HepG2 (cell line): ENCODE measurements at regions of chr11 and their contacts with region 1.

Region 1: DNA sequence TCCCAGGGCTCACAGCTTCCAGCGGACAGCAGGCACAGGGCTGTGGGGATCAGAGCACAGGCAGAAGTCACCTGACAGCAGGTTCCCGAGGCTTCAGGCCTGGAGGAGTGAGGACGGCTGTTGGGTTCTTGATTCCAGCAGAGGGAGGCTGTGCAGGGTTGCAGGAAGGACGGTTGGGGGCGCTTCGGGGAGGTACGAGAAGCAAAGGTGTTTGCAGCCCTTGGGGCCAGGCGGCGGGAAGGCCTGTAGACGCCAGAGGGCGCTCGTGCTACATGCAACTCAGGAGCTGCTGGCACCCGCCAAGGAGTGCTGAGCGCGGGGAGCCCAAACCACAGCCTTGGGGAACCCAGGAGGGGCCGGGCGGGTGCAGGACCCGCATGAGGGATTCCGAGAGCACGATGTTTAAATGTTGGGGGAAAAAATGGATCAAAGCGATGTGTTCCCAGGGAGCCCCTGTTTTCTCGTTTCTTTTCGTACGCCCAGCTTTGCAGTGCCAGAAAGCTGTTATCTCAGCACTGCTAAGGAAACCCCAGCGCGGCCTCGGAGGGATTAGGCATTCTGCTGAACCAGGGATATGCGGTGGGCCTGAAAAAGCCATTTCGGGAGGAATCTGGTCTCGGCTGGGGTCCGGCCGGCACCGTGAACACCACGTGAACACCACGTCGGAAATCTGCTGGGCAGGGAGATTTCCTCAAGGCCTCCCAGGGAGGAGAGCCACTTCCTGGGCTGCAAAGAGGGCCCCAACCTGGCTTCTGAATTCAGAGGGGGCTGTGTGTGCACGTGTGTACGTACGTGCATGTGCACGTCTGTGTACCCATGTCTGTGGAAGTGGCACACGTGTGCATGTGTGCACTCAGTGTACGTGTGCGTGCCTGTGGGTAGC is 88.1 kb downstream of the KCNQ1 start:
- DNase-seq: peak; percentile 85
- ATAC-seq: peak; percentile 82
- H3K4me3 ChIP-seq: peak overlapping the region in 1 of 3 experiments; percentile 29; a peak in 1 of 6 replicates
- H3K27ac ChIP-seq: no peak overlapping the region
- H3K4me1 ChIP-seq: peaks cover 28% of the 10 kb centered on the region
- H3K27me3 ChIP-seq: peaks cover 8 to 66% of the 10 kb centered on the region in 2 experiments; a peak in 4 of 5 replicates
- CTCF ChIP-seq: peak; percentile 97
- EP300 ChIP-seq: no peak
- POLR2A ChIP-seq: no peak
- RAD21 ChIP-seq: peak; percentile 99

Region 2: GRCh38 chr11:2314525-2315394 is 218.2 kb before region 1 on chr11:
- CTCF ChIA-PET with region 1: no interaction called
- POLR2A ChIA-PET with region 1: no interaction called
- in situ Hi-C with region 1: loop called (anchors 5 kb)
- intact Hi-C with region 1: loop called (anchors 10 kb)
- DNase-seq: no peak
- ATAC-seq: no peak
- H3K4me3 ChIP-seq: no peak overlapping the region
- H3K27ac ChIP-seq: no peak overlapping the region
- H3K4me1 ChIP-seq: no peaks in the 10 kb centered on the region
- H3K27me3 ChIP-seq: peaks cover 14 to 37% of the 10 kb centered on the region in 2 experiments; a peak in 3 of 5 replicates
- CTCF ChIP-seq: no peak
- EP300 ChIP-seq: no peak
- POLR2A ChIP-seq: no peak
- RAD21 ChIP-seq: no peak

Region 3: DNA sequence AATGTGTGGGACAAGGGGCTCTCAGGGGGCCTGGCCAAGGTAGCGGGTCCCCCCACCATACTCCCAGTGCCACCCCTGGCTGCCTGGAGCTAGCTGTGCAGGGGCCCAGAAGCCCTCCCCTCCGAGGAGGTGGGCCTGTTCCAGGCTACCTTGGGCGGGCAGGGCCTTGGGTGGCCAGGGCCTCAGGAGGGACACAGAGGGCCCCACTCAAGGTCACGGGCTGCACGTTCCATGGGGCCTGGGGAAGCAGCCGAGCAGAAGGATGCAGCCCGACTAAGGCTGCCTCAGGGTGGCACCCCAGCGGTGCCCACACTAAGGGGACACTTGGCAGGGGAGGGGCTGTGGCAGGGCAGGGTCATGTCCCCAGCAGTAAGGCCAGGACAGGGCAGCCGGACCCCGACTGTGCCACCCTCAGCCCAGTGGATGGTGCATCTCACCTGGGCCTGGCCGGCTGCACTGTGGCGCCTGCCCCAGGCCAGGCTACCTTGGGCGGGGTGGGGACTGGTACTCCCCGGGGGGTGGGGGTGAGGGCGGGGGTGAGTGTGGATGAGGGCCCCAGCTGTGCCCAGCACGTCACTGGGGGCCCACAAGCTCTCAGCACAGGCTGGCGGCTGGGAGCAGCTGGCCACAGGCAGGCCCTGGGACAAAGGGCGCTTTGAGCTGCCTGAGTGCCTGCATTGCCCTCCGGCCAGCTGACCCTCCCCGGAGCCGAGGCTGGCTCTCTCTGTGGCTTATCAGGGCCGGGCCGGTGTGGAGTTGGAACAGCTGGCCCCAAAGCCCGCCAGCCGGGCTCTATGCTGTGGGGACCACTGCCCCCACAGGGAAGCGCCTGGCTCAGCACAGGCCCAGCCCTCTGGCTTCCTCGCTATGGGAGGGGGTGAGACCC is 29.0 kb after region 1 on chr11:
- CTCF ChIA-PET with region 1: no interaction called
- POLR2A ChIA-PET with region 1: interaction called, 27 read pairs
- in situ Hi-C with region 1: no loop called
- intact Hi-C with region 1: no loop called
- DNase-seq: peak; percentile 76
- ATAC-seq: peak; percentile 86
- H3K4me3 ChIP-seq: peak overlapping the region in 1 of 3 experiments; percentile 39; a peak in 1 of 6 replicates
- H3K27ac ChIP-seq: peak overlapping the region; percentile 91
- H3K4me1 ChIP-seq: peaks cover 60% of the 10 kb centered on the region
- H3K27me3 ChIP-seq: peaks cover 7 to 26% of the 10 kb centered on the region in 2 experiments; a peak in 4 of 5 replicates
- CTCF ChIP-seq: no peak
- EP300 ChIP-seq: peak in 1 of 2 experiments; percentile 50; a peak in 1 of 4 replicates
- POLR2A ChIP-seq: no peak
- RAD21 ChIP-seq: 0 out of 2 replicates have a peak, but pooled peaks have one; percentile 20

Region 4: DNA sequence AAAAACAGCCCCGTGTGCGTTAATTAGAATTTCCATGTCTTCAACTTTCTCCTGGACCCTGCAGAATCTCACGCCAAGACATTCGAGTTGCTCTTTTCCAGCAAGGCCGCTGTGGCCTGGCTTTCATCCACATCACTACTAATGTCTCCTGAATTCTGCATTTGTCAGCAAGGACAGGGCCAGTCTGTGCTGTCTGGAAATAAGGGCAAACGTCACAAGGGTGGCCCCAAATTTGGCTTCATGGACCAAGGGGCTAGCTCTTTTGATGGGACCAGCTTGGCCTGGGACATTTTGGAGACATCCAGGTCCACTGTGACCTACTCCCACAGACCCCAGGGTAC is 133.4 kb after region 1 on chr11:
- CTCF ChIA-PET with region 1: no interaction called
- POLR2A ChIA-PET with region 1: no interaction called
- in situ Hi-C with region 1: loop called (anchors 10 kb)
- intact Hi-C with region 1: no loop called
- DNase-seq: no peak
- ATAC-seq: no peak
- H3K4me3 ChIP-seq: no peak overlapping the region
- H3K27ac ChIP-seq: no peak overlapping the region
- H3K4me1 ChIP-seq: peaks cover 87% of the 10 kb centered on the region
- H3K27me3 ChIP-seq: no peaks in the 10 kb centered on the region
- CTCF ChIP-seq: no peak
- EP300 ChIP-seq: no peak
- POLR2A ChIP-seq: 0 out of 4 replicates have a peak, but pooled peaks of 1 of the 2 experiments have one; percentile 23
- RAD21 ChIP-seq: no peak

Region 5: DNA sequence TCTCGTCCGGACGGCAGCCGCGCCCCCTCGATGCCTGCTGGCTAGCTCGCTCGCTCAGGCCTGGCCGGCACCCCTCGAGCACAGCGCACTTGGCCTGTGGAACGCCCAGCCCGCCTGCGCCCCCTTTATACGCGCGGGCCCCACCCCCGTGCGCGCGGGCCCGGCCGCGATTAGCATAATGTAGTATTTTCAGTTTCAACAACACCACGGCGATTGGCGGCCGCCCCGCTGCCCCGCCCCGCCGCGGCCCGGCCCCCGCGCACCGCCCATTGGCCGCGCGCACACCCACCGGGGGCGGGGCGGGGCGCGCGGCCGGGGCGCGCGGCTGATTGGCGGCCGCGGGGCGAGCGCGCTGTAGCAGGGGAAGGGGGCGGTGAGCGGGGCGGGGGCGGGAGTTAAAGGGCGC is 352.7 kb after region 1 on chr11 and contains the start of gene CDKN1C:
- CTCF ChIA-PET with region 1: interaction called, 148 read pairs
- POLR2A ChIA-PET with region 1: interaction called, 3 read pairs
- in situ Hi-C with region 1: loop called (anchors 5 kb)
- intact Hi-C with region 1: loop called (anchors 1 kb)
- DNase-seq: no peak
- ATAC-seq: no peak
- H3K4me3 ChIP-seq: no peak within 1 kb of the TSS
- H3K27ac ChIP-seq: no peak within 1 kb of the TSS
- H3K4me1 ChIP-seq: peaks cover 25% of the 10 kb centered on the region
- H3K27me3 ChIP-seq: peaks cover 6 to 33% of the 10 kb centered on the region in 2 experiments; a peak in 4 of 5 replicates
- CTCF ChIP-seq: no peak
- EP300 ChIP-seq: no peak
- POLR2A ChIP-seq: no peak
- RAD21 ChIP-seq: no peak
- total RNA-seq, gene CDKN1C: not detected in 2 replicates

Region 6: DNA sequence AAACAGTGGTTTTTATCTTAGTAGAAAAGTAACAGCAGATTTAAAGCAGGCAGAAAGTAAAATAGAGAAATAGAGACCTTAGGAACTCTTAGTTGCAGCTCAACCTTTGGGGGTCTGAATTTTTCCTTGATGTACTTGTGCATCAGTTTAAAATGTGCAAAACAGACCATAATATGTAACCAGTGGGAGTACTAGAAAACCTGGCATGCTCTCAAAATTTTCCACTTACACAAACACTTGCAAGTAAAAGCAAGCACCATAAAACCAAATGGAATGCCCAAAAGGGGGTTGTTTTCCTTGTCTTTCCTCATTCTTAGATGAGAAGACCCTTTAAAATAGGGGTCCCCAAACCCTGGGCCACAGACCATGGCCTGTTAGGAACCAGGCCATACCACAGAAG is 712.1 kb after region 1 on chr11:
- CTCF ChIA-PET with region 1: no interaction called
- POLR2A ChIA-PET with region 1: no interaction called
- in situ Hi-C with region 1: no loop called
- intact Hi-C with region 1: no loop called
- DNase-seq: no peak
- ATAC-seq: no peak
- H3K4me3 ChIP-seq: no peak overlapping the region
- H3K27ac ChIP-seq: no peak overlapping the region
- H3K4me1 ChIP-seq: no peaks in the 10 kb centered on the region
- H3K27me3 ChIP-seq: peaks cover 0 to 2% of the 10 kb centered on the region in 2 experiments; a peak in 2 of 5 replicates
- CTCF ChIP-seq: no peak
- EP300 ChIP-seq: no peak
- POLR2A ChIP-seq: no peak
- RAD21 ChIP-seq: no peak